Heart left ventricle (tissue), 16 donors: ENCODE measurements at regions of chr1 and their contacts with region 1.

Region 1: DNA sequence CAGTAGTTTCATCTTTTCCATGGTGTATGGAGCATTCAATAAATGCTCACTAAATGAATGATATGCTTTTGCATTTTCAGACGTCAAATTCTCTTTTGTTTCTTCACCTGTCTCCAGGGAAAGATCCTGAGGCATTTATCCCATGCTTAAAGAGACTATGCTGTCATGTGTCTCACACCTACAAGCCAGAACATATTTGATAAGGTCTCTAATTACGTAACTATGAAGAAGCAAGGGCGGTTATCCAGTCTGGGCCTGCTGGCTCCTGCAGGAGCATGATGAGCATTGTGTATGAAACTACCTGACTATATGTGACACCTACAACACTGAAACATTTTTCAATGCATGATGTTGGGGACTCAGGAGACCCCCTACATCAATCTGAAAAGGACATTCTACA is 51.8 kb downstream of the FBXO42 start:
- DNase-seq: no peak
- ATAC-seq: peak in 3 of 4 donors; percentile 62 to 78 (median 74)
- H3K4me3 ChIP-seq: no peak overlapping the region
- H3K27ac ChIP-seq: no peak overlapping the region
- H3K4me1 ChIP-seq: peaks cover 0 to 27% (median 4%) of the 10 kb centered on the region in 12 donors
- H3K27me3 ChIP-seq: no peaks in the 10 kb centered on the region
- CTCF ChIP-seq: no peak
- POLR2A ChIP-seq: no peak

Region 2: DNA sequence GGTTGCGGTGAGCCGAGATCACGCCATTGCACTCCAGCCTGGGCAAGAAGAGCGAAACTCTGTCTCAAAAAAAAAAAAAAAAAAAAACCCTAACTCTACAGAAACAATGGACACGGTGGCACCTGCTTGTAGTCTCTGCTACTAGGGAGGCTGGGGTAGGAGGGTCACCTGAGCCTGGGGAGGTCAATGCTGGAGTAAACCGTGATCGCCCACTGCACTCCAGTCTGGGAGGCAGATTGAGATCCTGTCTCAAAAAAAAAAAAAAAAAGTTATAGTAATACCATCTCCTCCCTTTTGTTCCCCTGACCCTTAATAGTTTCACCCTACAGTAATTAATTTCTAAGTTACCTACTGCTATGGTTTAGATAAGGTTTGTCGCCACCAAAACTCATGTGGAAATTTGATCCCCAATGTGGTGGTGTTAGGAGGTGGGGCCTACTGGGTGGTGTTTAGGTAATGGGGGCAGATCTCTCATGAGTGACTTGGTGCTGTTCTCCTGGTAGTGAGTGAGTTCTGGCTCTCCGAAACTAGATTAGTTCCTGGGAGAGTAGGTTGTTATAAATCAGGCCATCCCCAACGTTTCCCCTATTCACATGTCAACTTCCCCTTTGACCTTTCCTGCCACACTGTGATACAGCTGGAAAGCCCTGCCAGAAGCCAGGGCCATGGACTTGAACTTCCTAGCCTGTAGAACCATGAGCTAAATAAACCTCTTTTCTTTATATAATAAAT is 42.1 kb after region 1 on chr1:
- intact Hi-C with region 1: loop called in 1 of 10 experiments (anchors 5 kb)
- DNase-seq: no peak
- ATAC-seq: peak in 1 of 4 donors; percentile 19
- H3K4me3 ChIP-seq: no peak overlapping the region
- H3K27ac ChIP-seq: no peak overlapping the region
- H3K4me1 ChIP-seq: peaks cover 0 to 36% (median 11%) of the 10 kb centered on the region in 12 donors
- H3K27me3 ChIP-seq: no peaks in the 10 kb centered on the region
- CTCF ChIP-seq: no peak
- POLR2A ChIP-seq: no peak